SK-N-SH (cell line): ENCODE measurements at regions of chr3 and their contacts with region 1.

Region 1: GRCh38 chr3:184250167-184250828 is 826 bp downstream of the EEF1AKMT4 start:
- DNase-seq: peak; percentile 85
- H3K4me3 ChIP-seq: peak overlapping the region; percentile 94 to 97
- H3K27ac ChIP-seq: peak overlapping the region; percentile 52 to 77
- H3K4me1 ChIP-seq: peaks cover 0 to 3% of the 10 kb centered on the region in 2 experiments; a peak in 2 of 4 replicates
- H3K27me3 ChIP-seq: no peaks in the 10 kb centered on the region
- CTCF ChIP-seq: peak; percentile 89
- EP300 ChIP-seq: no peak
- RAD21 ChIP-seq: peak; percentile 79

Region 2: DNA sequence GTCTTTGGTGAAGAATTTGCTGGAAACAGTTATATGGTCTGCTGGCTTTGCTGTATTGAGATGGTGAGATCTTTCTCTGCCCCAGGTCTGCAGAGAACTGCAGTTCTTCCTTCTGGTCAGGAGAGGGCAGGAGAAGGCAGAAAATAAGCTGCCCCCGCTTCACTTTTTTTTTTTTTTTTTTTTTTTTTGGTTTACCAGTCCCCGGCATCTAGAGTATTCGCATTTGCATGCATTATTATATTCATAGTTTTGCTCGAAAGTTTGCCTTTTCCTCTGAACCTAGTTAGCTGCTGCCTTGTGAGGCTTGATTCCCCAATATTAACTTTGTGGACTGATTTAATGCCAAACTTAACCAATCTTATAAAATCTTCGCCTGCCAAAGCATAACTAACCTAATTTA is 355.0 kb before region 1 on chr3:
- CTCF ChIA-PET with region 1: interaction called, 21 read pairs
- POLR2A ChIA-PET with region 1: no interaction called
- DNase-seq: peak; percentile 84
- H3K4me3 ChIP-seq: no peak overlapping the region; a peak in 1 of 4 replicates
- H3K27ac ChIP-seq: no peak overlapping the region
- H3K4me1 ChIP-seq: no peaks in the 10 kb centered on the region
- H3K27me3 ChIP-seq: no peaks in the 10 kb centered on the region
- CTCF ChIP-seq: peak; percentile 87
- EP300 ChIP-seq: no peak
- RAD21 ChIP-seq: peak; percentile 94

Region 3: GRCh38 chr3:184145111-184145524 is 105.2 kb before region 1 on chr3:
- CTCF ChIA-PET with region 1: interaction called, 22 read pairs
- POLR2A ChIA-PET with region 1: no interaction called
- DNase-seq: peak; percentile 59
- H3K4me3 ChIP-seq: no peak overlapping the region
- H3K27ac ChIP-seq: no peak overlapping the region
- H3K4me1 ChIP-seq: peaks cover 0 to 2% of the 10 kb centered on the region in 2 experiments; a peak in 1 of 4 replicates
- H3K27me3 ChIP-seq: no peaks in the 10 kb centered on the region
- CTCF ChIP-seq: peak; percentile 42
- EP300 ChIP-seq: no peak
- RAD21 ChIP-seq: peak; percentile 67

Region 4: GRCh38 chr3:184174646-184175492 is 75.4 kb before region 1 on chr3 and contains the start of gene AP2M1:
- CTCF ChIA-PET with region 1: interaction called, 30 read pairs
- POLR2A ChIA-PET with region 1: interaction called, 3 read pairs
- DNase-seq: peak; percentile 95
- H3K4me3 ChIP-seq: peak within 1 kb of the TSS; percentile 93 to 96
- H3K27ac ChIP-seq: peak within 1 kb of the TSS; percentile 86 to 87
- H3K4me1 ChIP-seq: peaks cover 25 to 29% of the 10 kb centered on the region in 2 experiments
- H3K27me3 ChIP-seq: no peaks in the 10 kb centered on the region
- CTCF ChIP-seq: peak; percentile 25; the same call in 1 of the 2 replicates
- EP300 ChIP-seq: no peak
- RAD21 ChIP-seq: peak; percentile 7
- polyA plus RNA-seq, gene AP2M1: 645 and 759 TPM in 2 replicates

Region 5: DNA sequence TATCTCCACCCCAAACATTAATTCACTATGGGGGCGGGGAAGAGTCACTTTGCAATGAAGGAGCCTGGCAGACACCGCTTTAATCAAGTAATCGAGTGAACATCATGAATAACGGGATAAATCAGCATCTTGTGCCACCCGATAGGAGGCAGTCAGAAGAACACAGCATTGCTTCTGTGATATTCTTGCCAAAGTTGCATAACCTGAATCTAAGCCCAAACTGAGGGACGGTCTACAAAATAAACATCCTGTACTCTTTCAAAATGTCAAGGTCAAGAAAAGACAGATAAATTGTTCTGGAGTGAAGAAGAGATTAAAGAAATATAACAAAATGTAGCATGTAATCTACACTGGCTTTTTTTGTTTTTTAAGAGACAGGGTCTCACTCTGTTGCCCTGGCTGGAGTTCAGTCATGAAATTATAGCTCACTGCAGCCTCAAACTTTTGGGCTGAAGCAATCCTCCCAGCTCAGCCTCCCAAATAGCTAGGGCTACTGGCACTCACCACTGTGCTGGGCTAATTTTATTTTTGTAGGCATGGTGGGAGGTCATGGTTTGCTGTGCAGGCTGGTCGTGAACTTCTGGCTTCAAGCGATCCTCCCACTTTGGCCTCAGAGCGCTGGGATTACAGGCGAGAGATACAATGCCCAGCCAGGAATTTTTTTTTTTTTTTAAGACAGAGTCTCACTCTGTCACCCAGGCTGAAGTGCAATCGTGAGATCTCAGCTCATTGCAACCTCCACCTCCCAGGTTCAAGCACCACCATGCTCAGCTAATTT is 41.0 kb before region 1 on chr3:
- CTCF ChIA-PET with region 1: interaction called, 17 read pairs
- POLR2A ChIA-PET with region 1: no interaction called
- DNase-seq: no peak
- H3K4me3 ChIP-seq: no peak overlapping the region
- H3K27ac ChIP-seq: no peak overlapping the region
- H3K4me1 ChIP-seq: peaks cover 0 to 3% of the 10 kb centered on the region in 2 experiments; a peak in 1 of 4 replicates
- H3K27me3 ChIP-seq: peaks cover 15% of the 10 kb centered on the region
- CTCF ChIP-seq: no peak
- EP300 ChIP-seq: no peak
- RAD21 ChIP-seq: no peak

Region 6: DNA sequence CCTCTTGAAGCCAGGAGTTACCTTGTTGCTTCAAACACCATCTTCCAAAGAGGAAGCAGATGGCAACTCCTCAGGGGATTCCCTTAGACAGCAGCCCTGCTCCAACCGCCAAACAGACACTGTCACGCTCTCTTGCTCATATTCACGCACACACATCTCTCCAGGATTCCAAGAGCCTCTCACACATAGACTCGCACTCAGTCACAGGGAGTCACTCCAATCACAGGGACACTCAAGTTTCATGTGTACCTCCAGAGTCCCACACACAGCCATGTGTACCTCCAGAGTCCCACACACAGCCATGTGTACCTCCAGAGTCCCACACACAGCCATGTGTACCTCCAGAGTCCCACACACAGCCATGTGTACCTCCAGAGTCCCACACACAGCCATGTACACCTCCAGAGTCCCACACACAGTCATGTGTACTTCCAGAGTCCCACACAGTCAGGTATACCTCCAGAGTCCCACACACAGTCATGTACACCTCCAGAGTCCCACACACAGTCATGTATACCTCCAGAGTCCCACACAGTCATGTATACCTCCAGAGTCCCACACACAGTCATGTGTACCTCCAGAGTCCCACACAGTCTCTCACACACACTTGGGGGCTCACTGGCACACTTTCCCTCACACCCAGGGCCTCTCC is 14.8 kb before region 1 on chr3:
- CTCF ChIA-PET with region 1: interaction called, 29 read pairs
- POLR2A ChIA-PET with region 1: interaction called, 5 read pairs
- DNase-seq: no peak
- H3K4me3 ChIP-seq: no peak overlapping the region
- H3K27ac ChIP-seq: no peak overlapping the region
- H3K4me1 ChIP-seq: peaks cover 0 to 13% of the 10 kb centered on the region in 2 experiments; a peak in 2 of 4 replicates
- H3K27me3 ChIP-seq: peaks cover 15% of the 10 kb centered on the region
- CTCF ChIP-seq: no peak
- EP300 ChIP-seq: no peak
- RAD21 ChIP-seq: no peak

Region 7: GRCh38 chr3:184448311-184449160 is 198.2 kb after region 1 on chr3:
- CTCF ChIA-PET with region 1: no interaction called
- POLR2A ChIA-PET with region 1: no interaction called
- DNase-seq: no peak
- H3K4me3 ChIP-seq: no peak overlapping the region
- H3K27ac ChIP-seq: peak overlapping the region in 1 of 2 experiments; percentile 52; a peak in 2 of 4 replicates
- H3K4me1 ChIP-seq: no peaks in the 10 kb centered on the region
- H3K27me3 ChIP-seq: no peaks in the 10 kb centered on the region
- CTCF ChIP-seq: no peak
- EP300 ChIP-seq: peak in 1 of 2 experiments; percentile 87; a peak in 2 of 4 replicates
- RAD21 ChIP-seq: no peak